Esophagus muscularis mucosa (tissue), 4 donors: ENCODE measurements at regions of chr11 and their contacts with region 1.

Region 1: DNA sequence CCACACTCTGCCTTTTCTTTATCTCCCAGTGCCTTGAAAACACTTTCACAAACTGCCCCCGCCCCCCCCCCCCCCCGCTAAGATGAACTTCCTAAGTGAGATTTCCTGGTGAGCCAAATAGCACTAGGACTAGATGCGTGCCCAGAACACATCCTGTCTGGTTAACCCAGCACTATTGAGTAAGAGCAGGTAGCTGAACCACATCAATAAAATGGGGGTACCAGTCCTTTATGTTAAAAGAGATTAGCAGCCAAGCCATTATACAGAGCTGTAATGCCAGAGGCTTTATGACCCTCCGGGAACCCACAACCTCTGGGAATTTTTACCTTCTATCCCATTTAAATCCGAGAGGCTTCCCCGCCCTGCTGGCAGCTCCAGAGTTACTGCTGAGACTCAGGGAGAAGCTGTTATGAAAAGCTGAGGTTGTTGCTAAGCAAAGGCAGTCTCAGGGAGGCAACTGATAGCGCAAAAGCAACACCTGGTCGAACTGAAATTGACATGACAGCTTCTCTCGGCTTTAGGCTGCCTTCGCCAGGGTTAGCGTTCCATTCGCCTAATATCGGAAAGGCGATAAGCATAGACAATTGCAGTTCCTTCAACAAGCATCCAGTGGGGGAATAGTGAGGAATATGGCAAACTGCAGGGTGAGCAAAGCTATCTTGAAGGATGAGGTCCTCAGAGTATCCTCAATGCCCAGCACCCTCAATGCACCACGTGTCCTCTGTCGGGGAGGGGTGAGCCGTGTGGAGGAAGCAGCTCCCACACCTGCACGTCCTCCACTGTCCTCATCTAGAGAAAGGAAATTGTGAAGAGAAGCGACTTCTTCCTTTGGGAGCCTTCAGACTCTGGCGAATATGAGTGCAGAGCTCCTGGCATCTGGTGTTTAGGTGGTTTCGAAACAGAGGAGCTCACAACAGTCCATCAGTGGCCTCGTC is 977.0 kb downstream of the NTM start:
- DNase-seq: peak; percentile 74
- H3K4me3 ChIP-seq: no peak overlapping the region
- H3K27ac ChIP-seq: no peak overlapping the region
- H3K4me1 ChIP-seq: peaks cover 0 to 5% (median 0%) of the 10 kb centered on the region in 4 donors
- H3K27me3 ChIP-seq: peaks cover 0 to 14% (median 0%) of the 10 kb centered on the region in 4 donors
- CTCF ChIP-seq: no peak
- EP300 ChIP-seq: no peak
- POLR2A ChIP-seq: no peak

Region 2: GRCh38 chr11:132300283-132300682 is 47.1 kb before region 1 on chr11:
- intact Hi-C with region 1: loop called (anchors 2 kb)
- DNase-seq: no peak
- H3K4me3 ChIP-seq: no peak overlapping the region
- H3K27ac ChIP-seq: no peak overlapping the region
- H3K4me1 ChIP-seq: no peaks in the 10 kb centered on the region
- H3K27me3 ChIP-seq: no peaks in the 10 kb centered on the region
- CTCF ChIP-seq: no peak
- EP300 ChIP-seq: no peak
- POLR2A ChIP-seq: no peak